Left cardiac atrium (tissue), 4 donors: ENCODE measurements at regions of chr3 and their contacts with region 1.

Region 1: DNA sequence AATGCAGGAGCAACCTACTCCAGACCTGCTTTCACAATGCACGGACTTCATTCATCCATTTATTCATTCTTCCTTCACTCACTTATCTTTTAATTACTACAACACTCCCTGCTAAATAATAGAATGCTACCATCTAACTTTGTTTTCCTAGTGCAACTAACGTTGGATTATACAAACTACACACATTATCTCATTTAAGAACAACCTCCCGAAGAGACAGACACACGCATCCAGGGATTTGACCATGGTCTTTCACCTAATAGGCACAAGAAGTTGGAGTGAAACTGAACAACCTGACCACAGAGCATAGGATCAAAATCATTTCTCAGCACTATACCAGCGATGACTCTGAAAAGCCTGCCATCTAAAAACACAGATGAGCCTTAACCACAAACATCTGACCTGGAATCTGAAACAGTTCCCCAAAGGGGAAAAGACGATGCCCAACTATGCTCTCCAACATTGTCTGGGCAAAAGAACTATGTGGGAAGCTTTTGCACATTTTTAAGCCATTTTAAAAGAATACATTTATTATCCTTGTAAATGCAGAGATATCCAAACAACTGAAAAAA is 21.0 kb downstream of the ZNF385D start:
- DNase-seq: no peak
- ATAC-seq: no peak

Region 2: GRCh38 chr3:21645121-21645897 is 84.7 kb before region 1 on chr3:
- intact Hi-C with region 1: loop called in 1 of 2 experiments (anchors 10 kb)
- DNase-seq: peak; percentile 60
- ATAC-seq: peak; percentile 90 to 92

Region 3: GRCh38 chr3:21665444-21666100 is 64.4 kb before region 1 on chr3:
- intact Hi-C with region 1: no loop called
- DNase-seq: no peak
- ATAC-seq: no peak

Region 4: GRCh38 chr3:22007378-22007777 is 277.4 kb after region 1 on chr3:
- intact Hi-C with region 1: no loop called
- DNase-seq: no peak
- ATAC-seq: no peak

Region 5: DNA sequence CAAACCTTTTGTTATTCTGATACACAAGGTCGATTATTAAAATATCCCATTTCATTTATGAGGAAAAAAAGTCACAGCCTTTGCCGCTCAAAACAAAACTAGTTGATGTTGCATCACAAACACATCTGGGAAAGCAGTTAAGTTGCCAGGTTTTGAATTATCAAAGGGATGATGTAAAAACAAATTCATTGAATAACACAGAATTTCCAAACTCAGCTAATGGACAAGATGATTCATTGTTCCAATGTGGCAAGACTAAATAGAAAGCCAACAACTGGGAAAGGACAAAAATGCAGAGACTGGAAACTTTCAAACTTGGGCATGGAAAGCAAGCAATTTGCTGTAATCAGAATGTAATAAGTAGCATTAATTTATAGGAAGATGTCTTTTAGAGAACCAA is 631.0 kb after region 1 on chr3:
- intact Hi-C with region 1: no loop called
- DNase-seq: no peak
- ATAC-seq: peak in 1 of 2 donors; percentile 67